HepG2 (cell line): ENCODE measurements at regions of chr2 and their contacts with region 1.

Region 1: DNA sequence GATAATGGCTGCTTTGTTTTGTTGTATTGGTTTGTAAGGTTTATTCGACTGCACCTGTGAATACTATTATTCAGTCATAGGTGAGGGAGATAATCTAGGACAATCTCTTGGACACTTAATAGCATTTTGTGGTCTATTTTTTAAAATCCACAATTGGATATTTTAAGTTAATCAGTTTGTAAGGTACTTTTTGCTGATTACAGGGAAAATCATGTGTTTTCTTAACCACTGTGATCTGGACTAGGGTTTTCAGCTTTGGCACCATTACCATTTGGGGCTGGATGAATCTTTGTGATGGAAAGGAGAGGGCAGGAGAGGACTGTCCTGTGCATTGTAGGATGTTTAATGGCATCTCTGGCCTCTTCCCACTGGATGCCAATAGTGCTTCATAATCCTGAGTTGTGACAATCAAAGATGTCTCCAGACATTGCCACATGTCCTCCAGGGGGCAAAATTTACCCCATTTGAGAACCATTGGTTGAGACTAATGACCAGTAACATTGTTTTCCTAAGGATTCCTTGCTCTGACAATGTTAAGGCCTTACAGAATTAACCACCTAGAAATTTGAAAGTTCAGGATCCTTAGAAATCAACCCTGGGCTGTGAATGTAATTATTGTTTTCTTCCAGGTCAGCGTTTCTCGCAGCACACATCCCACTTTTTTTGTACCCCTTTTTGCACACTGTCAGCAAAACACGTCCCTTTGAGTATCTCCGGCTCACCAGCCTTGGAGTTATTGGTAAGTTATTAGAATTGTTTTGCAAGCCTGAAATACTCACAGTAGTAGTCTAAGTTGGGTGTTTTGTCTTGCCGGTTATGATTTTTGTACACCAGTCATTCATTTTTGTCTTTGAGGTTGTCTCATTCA is 15.6 kb downstream of the CNOT9 start:
- DNase-seq: no peak
- ATAC-seq: peak; percentile 63
- H3K4me3 ChIP-seq: no peak overlapping the region
- H3K27ac ChIP-seq: no peak overlapping the region
- H3K4me1 ChIP-seq: no peaks in the 10 kb centered on the region
- H3K27me3 ChIP-seq: no peaks in the 10 kb centered on the region
- CTCF ChIP-seq: peak; percentile 22; the same call in 1 of the 2 replicates
- EP300 ChIP-seq: no peak
- POLR2A ChIP-seq: no peak
- RAD21 ChIP-seq: no peak

Region 2: DNA sequence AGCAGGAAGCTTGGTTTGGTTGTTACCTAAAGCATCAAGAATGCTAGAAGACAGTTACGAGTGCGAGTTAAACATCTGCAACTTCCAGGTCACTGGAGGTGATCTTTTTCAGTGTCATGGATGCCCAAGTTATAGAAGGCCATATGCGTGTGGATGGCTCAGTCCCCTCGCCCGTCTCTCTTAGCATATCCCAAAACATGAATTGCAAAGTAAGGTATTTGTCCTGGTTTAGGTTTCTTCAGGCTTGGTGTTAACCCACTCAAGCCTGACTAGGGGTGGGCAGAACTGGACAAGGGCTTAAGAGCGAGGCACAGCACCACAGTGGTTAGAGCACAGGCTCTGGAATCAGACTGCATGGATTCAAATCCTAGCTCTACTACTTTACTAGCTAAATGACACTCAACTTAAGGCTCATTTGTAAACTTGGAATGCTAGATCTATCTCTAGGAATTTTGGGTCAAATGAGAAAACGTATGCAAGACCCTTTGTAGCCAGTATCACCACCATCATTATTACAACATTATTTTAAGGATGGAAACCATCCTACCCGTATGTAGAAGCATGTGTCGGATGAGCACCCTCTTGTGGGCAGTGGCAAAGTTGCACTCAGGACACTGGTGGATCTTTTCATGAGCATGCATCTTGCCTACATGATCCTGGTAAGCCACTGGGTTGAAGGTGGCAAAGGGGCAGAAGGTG is 64.0 kb after region 1 on chr2:
- CTCF ChIA-PET with region 1: no interaction called
- POLR2A ChIA-PET with region 1: no interaction called
- in situ Hi-C with region 1: no loop called
- intact Hi-C with region 1: loop called (anchors 1 kb)
- DNase-seq: peak; percentile 56
- ATAC-seq: peak; percentile 84
- H3K4me3 ChIP-seq: no peak overlapping the region
- H3K27ac ChIP-seq: no peak overlapping the region
- H3K4me1 ChIP-seq: peaks cover 11% of the 10 kb centered on the region; the same call in 1 of the 2 replicates
- H3K27me3 ChIP-seq: no peaks in the 10 kb centered on the region
- CTCF ChIP-seq: peak; percentile 95
- EP300 ChIP-seq: no peak
- POLR2A ChIP-seq: no peak
- RAD21 ChIP-seq: peak; percentile 77